Activated naive CD4-positive, alpha-beta T cell treated with anti-CD3 and anti-CD28 coated beads for 36 hours (primary cell): ENCODE measurements at regions of chr10 and their contacts with region 1.

Region 1: DNA sequence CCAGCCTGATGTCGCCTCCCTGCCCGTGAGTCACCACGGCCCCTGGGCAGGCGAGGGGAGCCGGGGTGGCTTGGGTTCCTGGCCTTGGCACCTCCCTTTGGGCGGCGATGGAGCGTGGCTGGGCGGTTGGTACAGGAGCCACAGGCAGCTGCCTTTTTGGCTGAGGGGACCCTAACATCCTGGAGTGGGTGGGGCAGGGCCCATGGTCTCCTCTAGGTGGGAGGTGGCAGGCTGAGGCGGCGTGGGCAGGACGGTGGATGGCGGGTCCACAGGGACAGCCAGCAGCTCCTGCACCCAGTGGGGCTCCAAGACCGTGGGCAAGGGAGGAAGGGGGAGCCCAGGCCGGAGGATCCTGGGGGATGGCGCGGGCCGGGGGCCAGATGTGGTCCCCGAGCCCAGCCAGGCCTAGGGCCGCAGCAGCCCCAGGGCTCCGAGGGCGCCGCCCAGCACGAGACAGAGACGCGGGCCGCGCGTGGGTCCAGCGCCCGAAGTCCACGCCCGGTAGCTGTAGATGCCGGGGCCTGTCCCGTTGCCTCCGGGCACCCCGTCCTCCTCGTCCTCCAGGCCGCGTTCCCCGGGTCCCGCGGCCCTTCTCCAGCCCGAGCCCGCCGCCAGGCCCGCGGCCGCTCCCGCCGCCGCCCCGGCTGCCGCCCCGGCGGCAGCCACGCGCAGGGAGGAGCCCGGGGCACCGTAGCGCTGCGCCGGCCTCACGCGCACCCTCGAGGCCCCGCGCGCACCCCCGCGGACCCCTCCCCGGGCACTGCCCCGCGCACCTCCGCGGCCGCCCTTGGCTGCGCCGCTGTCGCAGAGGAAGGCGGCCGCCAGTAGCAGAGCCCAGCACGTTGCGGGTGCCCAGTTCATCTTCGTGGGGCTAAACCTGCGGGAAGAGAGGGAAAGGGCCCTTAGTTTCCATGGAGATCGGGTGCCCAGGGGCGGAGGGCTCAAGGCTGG is 1.3 kb downstream of the SPRN start:
- DNase-seq: no peak
- H3K4me3 Mint-ChIP-seq: peak overlapping the region; percentile 41
- H3K27ac Mint-ChIP-seq: no peak overlapping the region
- H3K4me1 Mint-ChIP-seq: peaks cover 2% of the 10 kb centered on the region
- H3K27me3 Mint-ChIP-seq: no peaks in the 10 kb centered on the region

Region 2: GRCh38 chr10:133565441-133566294 is 142.6 kb after region 1 on chr10 and contains the start of gene SYCE1:
- CTCF ChIA-PET with region 1: no interaction called
- intact Hi-C with region 1: loop called (anchors 5 kb)
- DNase-seq: no peak
- H3K4me3 Mint-ChIP-seq: no peak within 1 kb of the TSS
- H3K27ac Mint-ChIP-seq: no peak within 1 kb of the TSS
- H3K4me1 Mint-ChIP-seq: no peaks in the 10 kb centered on the region
- H3K27me3 Mint-ChIP-seq: peaks cover 9% of the 10 kb centered on the region
- total RNA-seq, gene SYCE1: 0.17 TPM in 1 of 2 experiments, not detected in the other